ENCODE measurements at regions of chr4 and their contacts with region 1.

Region 1: GRCh38 chr4:184825896-184826690 is at the start of gene ACSL1:
- DNase-seq: peak; percentile 78 to 87
- ATAC-seq: peak; percentile 85 to 94 (median 86)
- H3K4me3 ChIP-seq: peak within 1 kb of the TSS; percentile 47
- H3K4me3 Mint-ChIP-seq: peak within 1 kb of the TSS; percentile 96
- H3K27ac ChIP-seq: peak within 1 kb of the TSS; percentile 49
- H3K27ac Mint-ChIP-seq: peak within 1 kb of the TSS; percentile 89 to 93
- H3K4me1 ChIP-seq: peaks cover 16% of the 10 kb centered on the region
- H3K4me1 Mint-ChIP-seq: peaks cover 24 to 27% of the 10 kb centered on the region in 2 donors
- H3K27me3 ChIP-seq: no peaks in the 10 kb centered on the region
- H3K27me3 Mint-ChIP-seq: peaks cover 9 to 16% of the 10 kb centered on the region in 2 donors
- CTCF ChIP-seq: no peak
- total RNA-seq, gene ACSL1: 13.2 to 43.1 (median 13.3) TPM

Region 2: DNA sequence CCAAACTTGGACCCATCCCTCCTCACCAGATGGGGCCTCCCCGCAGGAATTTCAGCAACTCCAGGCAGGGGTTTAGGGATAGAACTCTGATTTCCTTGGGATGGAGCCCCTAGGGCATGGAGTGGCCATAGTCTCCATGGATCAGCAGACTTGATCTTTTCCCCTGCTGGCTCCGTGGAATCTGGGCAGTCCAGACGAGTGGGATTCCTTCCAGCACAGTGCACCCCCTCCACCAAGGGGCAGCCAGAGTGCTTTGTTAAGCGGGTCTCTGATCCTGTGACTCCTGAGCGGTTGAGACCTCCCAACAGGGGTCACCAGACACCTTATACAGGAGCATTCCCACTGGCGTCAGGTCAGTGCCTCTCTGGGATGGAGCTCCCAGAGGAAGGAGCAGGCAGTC is 648.8 kb before region 1 on chr4:
- intact Hi-C with region 1: no loop called
- DNase-seq: no peak
- ATAC-seq: no peak
- H3K4me3 ChIP-seq: no peak overlapping the region
- H3K4me3 Mint-ChIP-seq: no peak overlapping the region
- H3K27ac ChIP-seq: no peak overlapping the region
- H3K27ac Mint-ChIP-seq: no peak overlapping the region
- H3K4me1 ChIP-seq: no peaks in the 10 kb centered on the region
- H3K4me1 Mint-ChIP-seq: no peaks in the 10 kb centered on the region
- H3K27me3 ChIP-seq: no peaks in the 10 kb centered on the region
- H3K27me3 Mint-ChIP-seq: peaks cover 39 to 53% of the 10 kb centered on the region in 2 donors
- CTCF ChIP-seq: no peak

Region 3: DNA sequence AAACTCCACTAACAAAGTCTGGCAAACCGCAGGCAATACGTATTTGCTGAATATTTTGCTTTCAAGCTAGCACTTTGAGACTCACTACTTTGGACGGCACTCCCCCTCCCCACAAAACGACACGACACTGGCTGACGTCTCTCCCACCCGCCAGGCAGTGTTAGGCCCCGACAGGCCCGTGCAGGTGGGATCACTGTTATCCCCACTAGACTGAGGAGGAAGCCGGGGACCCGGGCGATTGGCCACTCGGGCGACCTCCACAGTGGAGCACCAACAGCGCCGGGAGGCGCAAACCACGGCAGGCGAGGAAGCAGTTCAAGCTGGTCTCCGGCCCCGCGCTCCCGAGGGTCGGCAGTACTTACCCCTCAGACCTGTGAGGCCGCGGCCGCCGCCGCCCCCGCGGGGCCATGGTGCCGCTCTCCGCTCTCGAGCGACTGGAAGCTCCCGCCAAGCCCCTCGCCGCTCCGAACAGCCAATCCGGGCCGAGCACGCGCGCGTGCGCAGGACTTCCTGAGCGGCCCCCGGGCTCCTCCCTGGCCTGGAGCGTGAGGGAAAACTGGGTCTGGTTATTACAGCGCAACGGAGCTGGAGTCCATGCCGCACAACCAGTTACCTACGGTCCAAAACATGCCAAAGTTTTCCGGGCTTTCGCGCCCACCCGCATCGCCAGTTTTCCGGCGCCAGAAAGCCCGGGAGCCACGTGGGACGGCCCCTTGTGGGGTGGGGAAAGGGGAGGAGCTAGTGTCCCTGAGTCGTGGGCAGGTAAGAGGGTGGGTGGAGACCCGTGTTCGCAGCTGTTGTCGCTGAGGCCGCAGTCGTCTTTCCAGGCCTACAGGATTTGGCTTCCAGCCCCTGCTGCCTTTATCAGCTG is 92.2 kb before region 1 on chr4 and contains the start of gene CENPU:
- intact Hi-C with region 1: loop called (anchors 5 kb)
- DNase-seq: peak; percentile 95 to 97
- ATAC-seq: peak; percentile 95 to 98 (median 95)
- H3K4me3 ChIP-seq: peak within 1 kb of the TSS; percentile 69
- H3K4me3 Mint-ChIP-seq: peak within 1 kb of the TSS; percentile 91
- H3K27ac ChIP-seq: peak within 1 kb of the TSS; percentile 41
- H3K27ac Mint-ChIP-seq: peak within 1 kb of the TSS; percentile 73 to 90
- H3K4me1 ChIP-seq: peaks cover 9% of the 10 kb centered on the region
- H3K4me1 Mint-ChIP-seq: peaks cover 11 to 16% of the 10 kb centered on the region in 2 donors
- H3K27me3 ChIP-seq: no peaks in the 10 kb centered on the region
- H3K27me3 Mint-ChIP-seq: no peaks in the 10 kb centered on the region
- CTCF ChIP-seq: no peak
- total RNA-seq, gene CENPU: 6.5 to 12.1 (median 10.3) TPM

Region 4: DNA sequence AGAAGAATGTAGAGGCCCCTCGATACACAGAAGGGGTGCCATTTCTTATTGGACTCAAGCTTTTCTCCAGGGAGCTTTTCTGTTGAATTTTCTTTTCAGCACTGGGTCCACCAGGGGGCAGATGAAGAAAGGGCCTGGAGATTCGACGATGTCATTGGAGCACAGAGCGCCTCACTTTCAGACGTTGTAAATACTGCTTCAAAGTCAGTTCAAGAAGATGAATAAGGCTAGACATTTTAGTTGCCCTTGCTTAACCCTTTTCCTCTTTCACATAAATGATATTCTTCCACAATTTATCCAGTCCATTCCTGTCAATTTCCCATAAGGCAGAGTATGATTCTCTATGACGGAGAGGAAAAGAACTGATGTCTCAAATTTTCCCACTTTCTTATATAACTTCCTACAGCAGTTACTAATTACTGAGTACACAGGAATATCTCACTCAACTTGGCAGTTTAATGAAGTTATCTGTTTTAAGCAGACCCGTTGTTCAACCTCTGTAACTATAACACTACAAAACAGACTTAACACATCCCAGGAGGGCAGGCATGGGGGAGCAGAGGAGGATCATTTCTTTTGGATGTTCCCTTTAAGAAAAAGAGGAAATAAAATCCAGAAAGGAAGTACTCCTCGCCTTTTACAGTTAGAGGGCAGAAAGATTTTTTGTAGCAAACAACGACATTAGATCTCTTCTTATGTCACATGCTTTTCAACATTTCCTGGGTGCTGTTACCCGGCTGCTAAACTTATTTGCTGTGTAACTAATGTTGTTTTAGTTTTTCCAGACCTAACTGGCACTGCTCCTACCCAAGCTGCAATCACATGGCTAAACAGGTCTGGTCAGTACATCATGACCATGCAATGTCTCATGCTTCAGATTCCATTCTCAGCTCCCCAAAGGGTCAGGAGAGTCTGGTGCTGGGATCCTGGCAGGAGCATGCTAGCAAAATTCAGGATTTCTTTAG is 80.0 kb before region 1 on chr4:
- intact Hi-C with region 1: loop called (anchors 5 kb)
- DNase-seq: peak; percentile 26 to 85
- ATAC-seq: peak; percentile 77 to 90 (median 79)
- H3K4me3 ChIP-seq: no peak overlapping the region
- H3K4me3 Mint-ChIP-seq: no peak overlapping the region
- H3K27ac ChIP-seq: no peak overlapping the region
- H3K27ac Mint-ChIP-seq: no peak overlapping the region
- H3K4me1 ChIP-seq: peaks cover 6% of the 10 kb centered on the region
- H3K4me1 Mint-ChIP-seq: peaks cover 16 to 17% of the 10 kb centered on the region in 2 donors
- H3K27me3 ChIP-seq: no peaks in the 10 kb centered on the region
- H3K27me3 Mint-ChIP-seq: peaks cover 4 to 8% of the 10 kb centered on the region in 2 donors
- CTCF ChIP-seq: peak; percentile 66

Region 5: GRCh38 chr4:185304944-185305690 is 479.0 kb after region 1 on chr4:
- intact Hi-C with region 1: no loop called
- DNase-seq: peak in 1 of 2 donors; percentile 55
- ATAC-seq: peak in 1 of 3 donors; percentile 51
- H3K4me3 ChIP-seq: no peak overlapping the region
- H3K4me3 Mint-ChIP-seq: no peak overlapping the region
- H3K27ac ChIP-seq: no peak overlapping the region
- H3K27ac Mint-ChIP-seq: no peak overlapping the region
- H3K4me1 ChIP-seq: no peaks in the 10 kb centered on the region
- H3K4me1 Mint-ChIP-seq: peaks cover 0 to 11% of the 10 kb centered on the region in 2 donors
- H3K27me3 ChIP-seq: no peaks in the 10 kb centered on the region
- H3K27me3 Mint-ChIP-seq: no peaks in the 10 kb centered on the region
- CTCF ChIP-seq: no peak

Measured in natural killer cell (primary cell).